GM10248 (cell line): ENCODE measurements at regions of chr5 and their contacts with region 1.

Region 1: GRCh38 chr5:158852622-158853021 is 247.1 kb downstream of the EBF1 start:
- DNase-seq: peak; percentile 23
- CTCF ChIP-seq: no peak

Region 2: GRCh38 chr5:158837908-158838307 is 14.7 kb before region 1 on chr5:
- CTCF ChIA-PET with region 1: interaction called, 11 read pairs
- POLR2A ChIA-PET with region 1: no interaction called
- DNase-seq: no peak
- CTCF ChIP-seq: no peak

Region 3: GRCh38 chr5:158884827-158885518 is 32.4 kb after region 1 on chr5:
- CTCF ChIA-PET with region 1: no interaction called
- POLR2A ChIA-PET with region 1: no interaction called
- DNase-seq: peak; percentile 17
- CTCF ChIP-seq: no peak